ENCODE measurements at regions of chr3 and their contacts with region 1.

Region 1: GRCh38 chr3:73086071-73086494 is 24.6 kb downstream of the EBLN2 start:
- DNase-seq: peak; percentile 53
- CTCF ChIP-seq: peak; percentile 70

Region 2: GRCh38 chr3:71710906-71711494 is 1375.1 kb before region 1 on chr3:
- in situ Hi-C with region 1: loop called (anchors 25 kb)
- DNase-seq: peak; percentile 73
- CTCF ChIP-seq: peak; percentile 53

Region 3: DNA sequence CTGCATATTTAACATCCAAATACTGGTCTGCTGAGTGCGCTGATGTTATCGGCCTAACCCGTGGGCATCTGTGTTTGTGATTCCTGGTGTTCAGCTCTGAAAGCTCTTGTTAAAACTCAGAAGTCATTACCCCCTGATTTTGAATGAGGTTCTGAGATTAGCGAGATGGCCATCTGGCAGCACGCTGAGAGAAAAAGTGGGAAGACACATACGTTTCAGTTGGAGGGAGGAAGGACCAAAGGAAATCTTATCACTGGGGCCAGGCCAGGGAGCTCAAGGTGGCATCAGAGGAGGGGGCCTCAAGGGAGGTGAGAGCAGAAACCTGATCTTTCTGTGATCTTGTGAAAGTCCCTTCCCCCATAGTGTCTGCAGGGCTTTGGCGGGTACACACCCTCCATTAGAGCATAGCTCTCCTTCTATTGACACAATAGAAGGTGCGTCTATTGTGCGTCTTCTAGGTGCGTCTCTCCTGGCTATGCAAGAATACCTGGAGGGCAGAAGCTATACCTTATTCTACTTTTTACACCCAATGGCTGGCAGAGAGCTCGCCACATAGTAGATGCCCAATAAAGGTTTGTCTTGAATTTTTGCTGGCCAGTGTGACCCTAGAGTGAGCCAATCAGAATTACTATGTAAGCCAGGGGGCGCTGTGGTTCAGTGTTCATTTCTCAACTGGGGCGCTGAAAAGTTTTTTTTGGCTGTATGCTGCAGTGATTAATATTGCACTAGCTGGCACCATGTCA is 420.2 kb before region 1 on chr3:
- in situ Hi-C with region 1: loop called (anchors 25 kb)
- DNase-seq: peak; percentile 68
- CTCF ChIP-seq: peak; percentile 53

Region 4: DNA sequence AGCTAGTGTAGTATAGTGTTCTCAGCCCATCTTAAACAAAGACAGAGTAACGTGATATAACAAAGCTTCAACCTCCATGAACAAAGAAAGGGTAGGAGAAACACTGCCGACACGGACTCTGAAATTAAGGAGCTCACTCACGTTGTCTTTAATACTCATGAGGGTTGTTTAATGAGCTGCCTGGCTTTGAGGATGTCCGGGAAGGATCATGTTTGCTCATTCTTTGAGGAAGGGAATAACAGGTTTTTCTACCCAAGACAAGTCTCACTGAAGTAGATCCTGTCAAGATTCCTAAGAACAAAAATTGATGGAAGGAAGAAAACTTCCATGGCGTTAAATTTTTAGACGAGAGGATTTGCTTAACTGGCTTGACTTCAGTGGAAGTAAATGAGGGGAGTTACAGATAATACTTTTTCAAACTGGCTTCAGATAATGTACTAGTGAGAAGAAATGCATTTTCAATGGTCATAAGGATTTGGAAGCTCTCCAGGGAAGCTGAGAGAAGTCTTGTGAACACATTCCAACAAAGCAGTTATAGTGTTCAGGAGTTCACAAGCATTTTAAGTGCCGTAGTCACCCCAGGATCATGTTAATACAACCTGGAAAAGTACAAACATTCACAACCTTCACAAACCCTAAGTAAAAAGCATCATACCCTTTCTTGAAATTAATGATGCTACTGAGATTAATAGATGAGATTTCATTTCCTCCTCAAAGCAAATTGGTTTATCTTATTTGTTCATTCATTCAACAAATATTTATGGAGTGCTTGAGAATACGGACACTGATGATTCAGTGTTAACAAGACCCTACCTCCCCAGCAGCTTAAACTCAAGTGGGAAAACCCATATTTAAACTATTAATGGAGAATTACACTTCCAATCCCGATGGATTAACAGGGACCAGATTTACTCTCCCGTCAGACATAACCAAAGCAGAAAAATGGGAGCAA is 339.4 kb before region 1 on chr3:
- in situ Hi-C with region 1: no loop called
- DNase-seq: no peak
- CTCF ChIP-seq: no peak

Region 5: DNA sequence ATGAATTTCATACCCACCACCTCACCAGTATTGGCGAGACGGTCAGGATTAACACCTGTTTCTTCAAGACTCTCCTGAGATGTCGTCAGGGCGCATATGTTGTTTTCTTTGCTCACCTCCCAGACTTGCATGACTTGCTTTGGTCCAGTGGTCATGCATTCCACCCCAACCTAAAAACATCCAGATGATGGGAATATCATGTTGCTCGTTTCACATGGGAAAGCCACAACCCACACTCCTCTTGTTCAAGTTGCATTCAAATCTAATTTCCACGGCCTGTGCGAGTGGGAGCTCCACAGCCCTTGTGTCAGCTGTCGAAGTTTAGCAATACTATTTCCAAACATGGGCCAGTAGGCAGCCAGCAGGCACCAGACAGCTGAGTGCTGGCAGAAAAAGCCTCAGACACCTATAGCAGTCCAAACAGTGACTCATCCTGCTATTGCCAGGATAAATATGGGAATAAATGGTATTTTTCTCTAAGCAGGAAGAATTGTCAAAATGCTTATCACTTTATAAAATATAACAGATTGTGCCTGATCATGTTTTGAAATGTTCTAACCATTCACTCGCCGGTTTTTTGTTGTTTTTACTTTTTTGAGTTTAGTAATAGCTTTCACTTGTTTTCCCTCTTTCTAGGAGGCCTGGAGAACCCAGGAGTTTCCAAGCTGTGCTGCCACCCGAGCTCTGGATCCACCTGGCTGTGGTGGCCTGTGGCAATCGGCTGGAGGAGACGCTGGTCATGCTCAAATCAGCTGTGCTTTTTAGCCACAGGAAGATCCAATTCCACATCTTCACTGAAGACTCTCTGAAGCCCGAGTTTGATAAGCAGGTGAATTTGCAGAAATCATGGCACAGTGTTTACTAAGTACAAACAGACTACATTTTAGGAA is 178.1 kb before region 1 on chr3:
- in situ Hi-C with region 1: no loop called
- DNase-seq: no peak
- CTCF ChIP-seq: no peak

Region 6: GRCh38 chr3:72938471-72939265 is 147.4 kb before region 1 on chr3:
- in situ Hi-C with region 1: loop called (anchors 10 kb)
- DNase-seq: peak; percentile 69
- CTCF ChIP-seq: peak; percentile 23

Measured in GM13976 (cell line).